ENCODE measurements at regions of chr2 and their contacts with region 1.

Region 1: GRCh38 chr2:100730346-100730745 is 89.6 kb upstream of the NPAS2 start:
- DNase-seq: peak; percentile 88
- H3K4me3 ChIP-seq: no peak overlapping the region
- H3K27ac ChIP-seq: no peak overlapping the region
- H3K4me1 ChIP-seq: no peaks in the 10 kb centered on the region
- H3K27me3 ChIP-seq: peaks cover 0 to 2% of the 10 kb centered on the region in 2 experiments
- CTCF ChIP-seq: peak; percentile 68 to 71
- POLR2A ChIP-seq: no peak

Region 2: DNA sequence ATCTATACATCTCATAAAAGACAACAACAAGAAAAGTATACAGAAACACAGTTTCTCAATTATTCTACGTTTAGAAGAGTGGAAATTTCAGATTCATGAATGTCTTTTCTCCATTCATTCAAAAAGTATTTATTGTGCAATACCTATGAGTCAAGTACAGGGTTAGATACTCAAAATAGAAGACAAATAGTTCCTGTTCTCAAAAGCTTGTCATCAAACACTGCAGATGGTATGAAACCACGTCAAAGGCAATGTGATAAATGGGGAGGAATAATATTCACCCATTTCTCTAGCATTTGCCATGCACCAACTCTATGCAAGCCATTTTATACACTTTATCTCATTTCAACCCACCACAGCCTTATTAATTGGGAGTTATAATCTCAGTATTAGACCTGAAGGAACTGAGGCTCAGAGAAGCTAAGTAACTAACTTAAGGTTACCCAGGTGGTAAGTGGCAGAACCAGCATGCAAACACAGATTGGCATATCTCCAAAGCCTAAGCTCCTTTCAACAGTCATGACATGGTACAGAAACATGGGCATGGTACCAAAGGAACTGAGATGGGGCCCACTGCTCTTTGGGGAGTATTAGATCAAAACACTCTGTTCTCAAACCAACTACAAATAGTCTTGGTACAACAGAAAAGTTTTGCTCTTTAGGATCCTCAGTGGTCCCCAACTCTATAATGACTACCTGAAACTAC is 22.4 kb after region 1 on chr2:
- CTCF ChIA-PET with region 1: interaction called, 12 read pairs
- POLR2A ChIA-PET with region 1: no interaction called
- dilution Hi-C with region 1: no loop called
- intact Hi-C with region 1: no loop called
- DNase-seq: no peak
- H3K4me3 ChIP-seq: no peak overlapping the region
- H3K27ac ChIP-seq: no peak overlapping the region
- H3K4me1 ChIP-seq: peaks cover 13% of the 10 kb centered on the region
- H3K27me3 ChIP-seq: no peaks in the 10 kb centered on the region
- CTCF ChIP-seq: no peak
- POLR2A ChIP-seq: no peak

Region 3: DNA sequence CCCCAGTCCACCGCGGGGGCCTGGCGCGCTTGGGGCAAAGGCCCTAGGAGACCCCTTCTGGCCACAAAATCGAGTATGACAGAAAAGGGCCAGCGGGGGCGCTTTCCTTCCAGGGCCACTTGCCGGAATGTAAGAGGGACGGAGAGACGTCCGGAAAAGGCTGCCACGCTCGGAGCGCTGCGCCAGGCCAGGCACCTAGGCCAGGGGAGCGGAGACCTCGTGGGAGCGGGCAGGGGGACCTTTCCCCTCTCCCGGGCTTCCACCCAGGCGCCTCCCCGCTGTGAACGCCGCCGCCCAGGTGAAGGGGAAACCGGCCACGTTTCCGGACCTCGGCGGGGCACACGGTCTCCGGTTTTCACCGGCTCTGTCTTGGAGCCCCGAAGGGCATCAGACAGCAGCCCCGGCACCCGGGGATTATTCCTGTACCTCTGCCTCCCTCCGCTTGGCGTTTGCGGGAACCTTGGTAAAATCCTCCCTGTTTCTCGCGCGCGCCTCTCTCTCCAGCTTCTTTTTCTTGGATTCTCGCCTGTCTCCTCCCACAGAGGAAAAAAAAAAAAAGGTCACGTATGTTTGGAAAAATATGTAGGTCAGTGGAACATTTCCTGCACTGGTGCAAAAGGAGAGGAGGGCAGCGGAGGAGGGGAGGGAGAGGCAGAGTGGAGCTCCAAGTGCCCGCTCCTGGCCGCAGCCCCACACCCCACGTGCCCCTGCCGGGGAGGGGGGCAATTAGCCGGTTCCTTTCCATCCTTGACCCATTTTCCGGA is 88.4 kb after region 1 on chr2:
- CTCF ChIA-PET with region 1: interaction called, 29 read pairs
- POLR2A ChIA-PET with region 1: no interaction called
- dilution Hi-C with region 1: no loop called
- intact Hi-C with region 1: loop called (anchors 1 kb)
- DNase-seq: peak; percentile 90
- H3K4me3 ChIP-seq: peak overlapping the region; percentile 61 to 87 (median 63)
- H3K27ac ChIP-seq: peak overlapping the region; percentile 85
- H3K4me1 ChIP-seq: peaks cover 49% of the 10 kb centered on the region
- H3K27me3 ChIP-seq: no peaks in the 10 kb centered on the region
- CTCF ChIP-seq: peak; percentile 44 to 51
- POLR2A ChIP-seq: no peak

Region 4: DNA sequence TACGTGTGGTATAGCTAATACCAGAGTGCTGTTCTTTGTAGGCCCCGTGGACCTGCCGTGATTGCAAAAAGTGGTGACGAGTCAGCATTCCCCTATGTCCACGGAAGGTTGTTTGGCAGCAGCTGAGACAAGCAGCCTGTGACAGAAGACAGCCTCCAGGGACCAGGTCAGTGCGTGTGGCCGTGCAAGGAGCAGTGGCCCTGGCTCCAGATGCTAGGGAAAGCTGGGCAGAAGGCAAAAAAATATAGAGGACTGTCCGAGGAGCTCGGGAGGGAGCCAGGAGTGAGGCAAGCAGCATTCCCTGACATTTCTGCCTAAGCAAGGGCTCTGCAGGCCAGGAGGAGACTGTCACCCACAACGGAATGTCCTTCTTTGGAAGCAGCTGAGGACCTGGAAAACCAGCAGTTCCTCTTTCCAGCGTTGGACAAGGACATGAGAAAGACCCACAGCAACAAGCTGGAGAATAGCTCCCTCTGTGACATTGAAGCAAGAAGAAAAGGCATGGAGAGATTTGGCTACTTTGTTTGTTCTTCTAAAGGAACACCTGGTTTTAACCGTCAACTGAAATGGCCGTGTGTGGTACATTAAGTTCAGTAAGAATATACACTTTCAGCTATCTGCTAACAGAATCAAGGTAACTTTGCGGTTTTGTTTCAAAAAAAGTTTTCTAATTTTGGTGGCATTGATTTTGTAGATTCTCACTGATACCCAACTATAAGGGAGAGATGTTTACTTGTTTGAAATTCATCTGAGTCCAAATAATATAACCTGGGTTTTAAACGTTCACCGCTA is 147.8 kb after region 1 on chr2:
- CTCF ChIA-PET with region 1: interaction called, 11 read pairs
- POLR2A ChIA-PET with region 1: no interaction called
- dilution Hi-C with region 1: no loop called
- intact Hi-C with region 1: loop called (anchors 2 kb)
- DNase-seq: peak; percentile 32
- H3K4me3 ChIP-seq: no peak overlapping the region
- H3K27ac ChIP-seq: peak overlapping the region; percentile 90
- H3K4me1 ChIP-seq: peaks cover 69% of the 10 kb centered on the region
- H3K27me3 ChIP-seq: no peaks in the 10 kb centered on the region
- CTCF ChIP-seq: no peak
- POLR2A ChIP-seq: no peak

Region 5: DNA sequence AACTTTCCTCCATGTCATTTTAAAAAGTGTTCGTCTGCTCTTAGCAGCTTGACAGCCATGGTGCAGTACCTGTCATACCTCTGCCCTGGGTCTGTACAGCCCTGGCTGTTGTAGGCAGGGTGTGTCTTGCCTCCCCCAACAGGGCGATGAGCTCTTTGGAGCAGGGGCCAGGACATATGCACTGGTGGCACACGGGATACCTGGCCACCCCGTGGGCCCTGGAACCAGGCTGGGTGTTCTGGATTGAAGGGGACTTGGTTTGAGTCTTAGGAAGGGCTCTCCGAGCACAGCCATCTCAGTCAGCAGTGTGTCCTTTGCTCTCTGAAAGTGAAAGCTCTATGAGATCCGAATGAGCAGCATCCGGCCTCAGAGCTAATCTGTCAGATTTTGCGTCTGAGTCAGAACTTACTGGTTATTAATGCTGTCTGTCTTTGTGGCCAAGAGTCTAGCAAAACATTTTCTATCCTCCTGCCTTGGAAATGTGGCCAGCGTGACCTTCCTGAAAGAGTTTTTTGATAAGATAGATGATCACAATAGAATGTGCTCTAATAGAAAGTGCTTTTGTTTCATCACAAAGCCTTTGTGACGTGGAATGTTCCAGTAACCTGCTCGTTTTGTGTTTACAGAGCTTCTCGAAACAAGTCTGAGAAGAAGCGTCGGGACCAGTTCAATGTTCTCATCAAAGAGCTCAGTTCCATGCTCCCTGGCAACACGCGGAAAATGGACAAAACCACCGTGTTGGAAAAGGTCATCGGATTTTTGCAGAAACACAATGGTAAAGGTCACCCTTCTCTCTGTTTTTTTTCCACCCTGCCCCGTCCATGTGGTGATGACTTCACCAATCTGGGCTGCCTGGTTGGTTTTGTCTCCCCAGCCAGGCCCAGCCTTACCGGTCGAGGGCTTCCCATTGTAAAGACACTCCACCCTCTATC is 194.4 kb after region 1 on chr2:
- CTCF ChIA-PET with region 1: interaction called, 16 read pairs
- POLR2A ChIA-PET with region 1: no interaction called
- dilution Hi-C with region 1: no loop called
- intact Hi-C with region 1: no loop called
- DNase-seq: peak; percentile 99
- H3K4me3 ChIP-seq: peak overlapping the region in 2 of 3 experiments; percentile 11 to 29
- H3K27ac ChIP-seq: peak overlapping the region; percentile 96
- H3K4me1 ChIP-seq: peaks cover 28% of the 10 kb centered on the region
- H3K27me3 ChIP-seq: no peaks in the 10 kb centered on the region
- CTCF ChIP-seq: no peak
- POLR2A ChIP-seq: peak; percentile 7

Region 6: GRCh38 chr2:100984892-100985379 is 254.6 kb after region 1 on chr2:
- CTCF ChIA-PET with region 1: interaction called, 104 read pairs
- POLR2A ChIA-PET with region 1: no interaction called
- dilution Hi-C with region 1: no loop called
- intact Hi-C with region 1: loop called (anchors 1 kb)
- DNase-seq: peak; percentile 78
- H3K4me3 ChIP-seq: no peak overlapping the region
- H3K27ac ChIP-seq: no peak overlapping the region
- H3K4me1 ChIP-seq: peaks cover 7% of the 10 kb centered on the region
- H3K27me3 ChIP-seq: no peaks in the 10 kb centered on the region
- CTCF ChIP-seq: peak; percentile 76 to 84
- POLR2A ChIP-seq: no peak

Region 7: GRCh38 chr2:101151141-101151858 is 421.0 kb after region 1 on chr2 and contains the start of gene TBC1D8:
- CTCF ChIA-PET with region 1: interaction called, 7 read pairs
- POLR2A ChIA-PET with region 1: no interaction called
- dilution Hi-C with region 1: no loop called
- intact Hi-C with region 1: loop called (anchors 1 kb)
- DNase-seq: peak; percentile 75
- H3K4me3 ChIP-seq: peak within 1 kb of the TSS; percentile 56 to 89 (median 87)
- H3K27ac ChIP-seq: peak within 1 kb of the TSS; percentile 68
- H3K4me1 ChIP-seq: peaks cover 37% of the 10 kb centered on the region
- H3K27me3 ChIP-seq: no peaks in the 10 kb centered on the region
- CTCF ChIP-seq: no peak
- POLR2A ChIP-seq: peak; percentile 94
- total RNA-seq, gene TBC1D8: 30.6 and 32.1 TPM in 2 replicates

Measured in endothelial cell of umbilical vein (primary cell).